K562 (cell line): ENCODE measurements at regions of chr16 and their contacts with region 1.

Region 1: GRCh38 chr16:66954097-66954659 is 6.9 kb upstream of the CES3 start:
- DNase-seq: peak; percentile 71 to 88 (median 78)
- ATAC-seq: peak; percentile 97
- H3K4me3 ChIP-seq: no peak overlapping the region
- H3K27ac ChIP-seq: no peak overlapping the region
- H3K4me1 ChIP-seq: peaks cover 0 to 7% of the 10 kb centered on the region in 2 experiments; a peak in 1 of 5 replicates
- H3K27me3 ChIP-seq: no peaks in the 10 kb centered on the region
- CTCF ChIP-seq: peak; percentile 84 to 89 (median 88)
- EP300 ChIP-seq: no peak
- POLR2A ChIP-seq: no peak
- RAD21 ChIP-seq: peak; percentile 77 to 90

Region 2: DNA sequence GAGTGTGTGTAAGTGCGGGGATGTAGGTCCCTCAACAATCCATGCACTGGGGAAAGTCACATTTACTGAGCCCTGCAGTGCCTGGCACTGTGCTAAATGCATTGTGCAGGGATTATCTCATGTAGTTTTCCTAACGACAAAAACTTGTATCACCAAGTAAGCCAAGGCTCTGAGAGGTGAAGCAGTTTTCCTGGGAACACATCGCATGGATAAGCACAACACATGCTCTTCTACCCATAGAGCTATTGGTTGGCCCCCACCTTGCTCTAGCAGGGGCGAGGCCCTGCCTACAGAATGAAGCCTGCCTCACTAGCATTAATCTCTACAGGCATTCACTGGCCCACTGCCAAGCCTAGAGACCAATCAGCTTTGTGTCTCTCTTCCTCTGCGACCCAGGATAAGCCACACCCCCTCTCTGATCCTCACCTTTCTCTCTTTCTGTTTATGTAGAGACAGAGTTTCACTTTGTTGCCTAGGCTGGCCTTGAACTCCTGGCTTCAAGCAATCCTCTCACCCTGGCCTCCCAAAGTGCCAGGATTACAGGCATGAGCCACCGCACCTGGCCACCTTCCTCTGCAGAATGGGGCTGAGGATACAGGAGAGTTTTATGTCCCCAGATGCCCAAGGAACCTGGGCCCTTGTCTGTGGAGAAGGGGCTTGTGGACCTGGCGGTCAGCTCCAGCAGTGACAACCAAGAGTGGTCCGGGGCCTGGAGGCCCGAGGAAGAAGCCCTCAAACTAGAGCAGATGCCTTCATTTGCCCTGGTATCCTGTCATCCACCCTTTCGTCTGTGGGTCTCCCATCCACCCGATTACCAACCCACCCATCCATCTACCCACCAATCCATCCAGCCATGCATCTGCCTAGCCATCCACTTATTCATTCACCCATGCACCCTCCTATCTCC is 48.3 kb before region 1 on chr16:
- CTCF ChIA-PET with region 1: no interaction called
- POLR2A ChIA-PET with region 1: no interaction called
- in situ Hi-C with region 1: no loop called
- intact Hi-C with region 1: no loop called
- DNase-seq: peak; percentile 90 to 96 (median 94)
- ATAC-seq: peak; percentile 92
- H3K4me3 ChIP-seq: no peak overlapping the region
- H3K27ac ChIP-seq: no peak overlapping the region
- H3K4me1 ChIP-seq: peaks cover 22 to 50% of the 10 kb centered on the region in 2 experiments
- H3K27me3 ChIP-seq: no peaks in the 10 kb centered on the region
- CTCF ChIP-seq: no peak
- EP300 ChIP-seq: no peak
- POLR2A ChIP-seq: no peak
- RAD21 ChIP-seq: no peak

Region 3: GRCh38 chr16:67159593-67160406 is 205.6 kb after region 1 on chr16 and contains the starts of genes FBXL8 and TRADD:
- CTCF ChIA-PET with region 1: interaction called, 3 read pairs
- POLR2A ChIA-PET with region 1: no interaction called
- in situ Hi-C with region 1: loop called (anchors 25 kb)
- intact Hi-C with region 1: loop called (anchors 2 kb)
- DNase-seq: peak; percentile 83 to 88 (median 88)
- ATAC-seq: peak; percentile 85
- H3K4me3 ChIP-seq: peak within 1 kb of the TSS; percentile 73
- H3K27ac ChIP-seq: peak within 1 kb of the TSS; percentile 78
- H3K4me1 ChIP-seq: peaks cover 25 to 75% of the 10 kb centered on the region in 2 experiments
- H3K27me3 ChIP-seq: no peaks in the 10 kb centered on the region
- CTCF ChIP-seq: peak; percentile 52 to 84 (median 60)
- EP300 ChIP-seq: no peak; the same call in 1 of the 2 replicates
- POLR2A ChIP-seq: peak; percentile 75
- RAD21 ChIP-seq: peak; percentile 23 to 25; a peak in 3 of 4 replicates
- polyA plus RNA-seq, gene FBXL8: 0.08 TPM in 1 of 2 experiments, not detected in the other
- polyA plus RNA-seq, gene TRADD: 0.76 to 1.7 TPM

Region 4: DNA sequence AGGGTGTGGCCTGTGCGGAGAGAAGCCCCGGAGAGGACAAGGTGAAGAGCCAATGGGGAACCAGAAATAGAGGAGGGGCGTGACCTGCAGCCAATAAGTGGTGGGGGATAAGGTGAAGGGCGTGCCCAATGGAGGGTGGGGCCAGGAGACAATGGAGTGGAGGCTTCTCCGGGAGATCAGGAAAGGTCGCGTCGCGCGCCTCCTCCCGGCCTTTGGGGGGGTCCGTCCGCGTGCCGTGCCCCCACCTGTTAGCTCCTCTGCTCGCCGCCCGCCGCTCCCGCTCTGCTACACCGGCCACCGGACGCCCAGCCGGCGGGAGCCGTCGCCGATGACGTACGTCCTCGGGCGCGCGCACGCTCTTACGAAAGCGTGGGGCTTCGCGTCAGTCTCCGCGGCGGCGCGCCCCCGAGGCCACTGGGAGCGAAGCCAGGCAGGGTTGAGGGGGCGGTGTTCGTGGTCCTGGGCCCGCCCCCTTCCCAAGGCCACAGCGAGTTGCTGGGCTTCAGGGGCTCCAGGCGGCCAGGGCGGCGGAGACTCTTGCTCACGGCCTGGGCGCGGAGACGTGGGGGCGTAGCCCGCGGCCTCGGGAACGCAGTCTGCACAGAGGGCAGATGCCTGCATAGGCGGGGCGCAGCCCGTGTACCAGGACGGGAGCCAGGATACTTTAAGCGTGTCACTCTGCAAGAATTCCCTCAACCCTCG is 229.6 kb after region 1 on chr16 and contains the start of gene MATCAP1:
- CTCF ChIA-PET with region 1: no interaction called
- POLR2A ChIA-PET with region 1: no interaction called
- in situ Hi-C with region 1: no loop called
- intact Hi-C with region 1: loop called (anchors 10 kb)
- DNase-seq: peak; percentile 98 to 100 (median 98)
- ATAC-seq: peak; percentile 97
- H3K4me3 ChIP-seq: peak within 1 kb of the TSS; percentile 61
- H3K27ac ChIP-seq: peak within 1 kb of the TSS; percentile 91
- H3K4me1 ChIP-seq: peaks cover 13 to 50% of the 10 kb centered on the region in 2 experiments
- H3K27me3 ChIP-seq: no peaks in the 10 kb centered on the region
- CTCF ChIP-seq: no peak; a peak in 1 of 6 replicates
- EP300 ChIP-seq: no peak
- POLR2A ChIP-seq: peak; percentile 88
- RAD21 ChIP-seq: no peak
- polyA plus RNA-seq, gene MATCAP1: 3.4 to 3.8 TPM

Region 5: DNA sequence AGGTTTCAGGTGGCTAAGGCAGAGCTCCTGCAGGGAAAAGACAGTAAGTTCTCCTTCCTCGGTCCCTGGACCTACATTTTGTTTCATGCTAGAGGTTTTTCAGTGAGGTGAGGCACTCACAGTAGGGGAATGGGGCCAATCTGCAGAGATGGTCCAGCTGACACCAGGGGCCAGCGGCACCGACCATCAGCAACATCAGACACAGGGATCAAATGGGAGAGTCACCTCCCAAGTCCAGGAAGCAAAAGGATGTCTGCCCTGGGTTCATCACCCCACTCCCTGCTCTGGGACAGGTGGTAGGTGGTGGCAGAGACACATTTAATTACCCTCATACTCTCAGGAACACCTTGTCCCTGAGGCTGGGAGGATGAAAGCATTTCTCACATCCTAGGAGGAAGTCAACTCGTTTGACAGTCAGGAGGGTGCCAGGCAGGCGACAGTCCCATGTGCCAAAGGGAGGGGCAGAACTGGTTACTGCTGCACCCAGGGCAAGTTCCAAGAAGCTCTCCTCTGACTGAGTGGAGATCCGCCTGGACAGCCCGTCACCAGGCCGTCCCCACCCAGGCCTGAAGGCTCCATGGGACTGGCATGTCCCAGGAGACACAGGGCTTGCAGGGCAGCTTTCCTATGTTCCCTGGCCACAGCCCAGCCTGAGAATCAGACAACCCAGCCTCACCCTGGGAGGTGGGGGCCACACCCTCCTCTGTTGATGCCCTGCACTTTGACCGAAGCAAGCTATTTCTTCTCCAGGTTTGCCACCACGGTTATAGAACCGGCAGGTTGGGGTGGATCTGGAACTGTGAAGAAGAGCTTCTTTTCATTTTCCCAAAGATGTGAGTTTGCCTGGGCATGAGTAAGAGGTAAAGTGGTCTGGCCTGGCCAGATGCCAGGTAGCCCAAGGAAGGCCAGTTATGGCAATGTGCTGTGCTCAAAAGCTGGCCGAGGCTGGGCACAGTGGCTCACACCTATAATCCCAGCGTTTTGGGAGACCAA is 507.7 kb after region 1 on chr16:
- CTCF ChIA-PET with region 1: no interaction called
- POLR2A ChIA-PET with region 1: no interaction called
- in situ Hi-C with region 1: no loop called
- intact Hi-C with region 1: loop called (anchors 10 kb)
- DNase-seq: no peak
- ATAC-seq: no peak
- H3K4me3 ChIP-seq: no peak overlapping the region
- H3K27ac ChIP-seq: no peak overlapping the region; the same call in 2 of the 3 replicates
- H3K4me1 ChIP-seq: peaks cover 30 to 48% of the 10 kb centered on the region in 2 experiments
- H3K27me3 ChIP-seq: no peaks in the 10 kb centered on the region
- CTCF ChIP-seq: no peak
- EP300 ChIP-seq: no peak
- POLR2A ChIP-seq: no peak
- RAD21 ChIP-seq: no peak